ENCODE measurements at regions of chr12 and their contacts with region 1.

Region 1: DNA sequence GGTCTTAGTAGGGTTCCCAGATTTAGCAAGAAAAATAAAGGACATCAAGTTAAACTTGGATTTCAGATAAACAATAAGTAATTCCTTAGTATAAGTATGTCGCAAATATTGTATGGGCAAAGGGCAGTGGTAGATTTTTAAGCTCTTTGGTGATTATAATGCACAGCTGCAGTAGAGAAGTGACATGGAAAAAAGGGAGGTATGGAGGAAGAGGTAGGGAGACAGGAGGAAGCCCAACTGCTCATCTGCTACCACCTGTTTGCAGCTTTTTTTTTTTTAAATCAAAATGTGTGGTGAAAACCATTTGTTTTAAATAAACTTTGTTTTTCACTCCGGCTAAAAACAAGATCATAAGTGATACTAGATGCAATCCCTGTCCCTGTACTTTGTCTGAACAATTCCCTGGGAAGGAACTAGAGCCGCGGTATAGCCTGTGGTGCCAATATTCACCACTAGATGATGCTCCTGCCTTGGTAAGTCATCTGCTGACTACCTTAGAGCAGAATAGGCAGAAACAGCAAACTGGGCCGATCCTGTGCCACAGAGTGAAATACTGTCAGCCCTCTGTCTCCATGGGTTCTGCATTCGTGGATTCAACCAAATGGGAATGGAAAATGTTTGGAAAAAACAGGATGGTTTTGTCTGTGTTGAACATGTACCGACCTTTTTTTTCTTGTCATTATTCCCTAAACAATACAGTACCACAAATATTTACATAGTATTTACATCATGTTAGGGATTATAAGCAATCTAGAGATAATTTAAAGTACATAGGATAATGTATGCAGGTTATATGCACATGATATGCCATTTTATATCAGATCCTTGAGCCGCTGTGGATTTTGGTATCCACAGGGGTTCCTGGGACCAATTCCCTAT is 62.4 kb upstream of the PLBD1 start:
- DNase-seq: peak; percentile 76
- ATAC-seq: peak; percentile 97
- H3K4me3 Mint-ChIP-seq: no peak overlapping the region
- H3K27ac Mint-ChIP-seq: no peak overlapping the region
- H3K4me1 Mint-ChIP-seq: peaks cover 1% of the 10 kb centered on the region
- H3K27me3 Mint-ChIP-seq: no peaks in the 10 kb centered on the region
- CTCF ChIP-seq: peak; percentile 94

Region 2: DNA sequence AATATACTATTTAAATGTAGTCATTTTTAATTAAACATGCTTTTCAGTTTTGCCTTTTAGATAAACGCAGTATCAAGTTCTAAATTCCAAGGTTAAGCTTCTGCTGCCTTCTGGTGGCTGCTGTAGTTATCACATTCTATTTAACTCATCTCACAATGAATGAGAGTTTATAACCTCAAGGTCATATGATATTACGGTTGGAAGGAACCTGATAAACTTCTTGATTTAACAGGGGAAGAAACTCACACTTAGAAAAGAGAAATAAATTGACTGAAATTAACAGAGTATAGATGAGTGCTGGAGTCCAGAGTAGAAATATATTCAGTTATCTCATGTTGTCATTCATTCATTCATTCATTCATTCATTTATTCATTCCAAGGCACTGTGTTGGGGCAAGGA is 34.4 kb after region 1 on chr12:
- CTCF ChIA-PET with region 1: interaction called, 10 read pairs
- POLR2A ChIA-PET with region 1: no interaction called
- intact Hi-C with region 1: loop called (anchors 1 kb)
- DNase-seq: peak; percentile 57
- ATAC-seq: peak; percentile 65
- H3K4me3 Mint-ChIP-seq: no peak overlapping the region
- H3K27ac Mint-ChIP-seq: no peak overlapping the region
- H3K4me1 Mint-ChIP-seq: peaks cover 6% of the 10 kb centered on the region
- H3K27me3 Mint-ChIP-seq: peaks cover 5% of the 10 kb centered on the region
- CTCF ChIP-seq: peak; percentile 80

Region 3: DNA sequence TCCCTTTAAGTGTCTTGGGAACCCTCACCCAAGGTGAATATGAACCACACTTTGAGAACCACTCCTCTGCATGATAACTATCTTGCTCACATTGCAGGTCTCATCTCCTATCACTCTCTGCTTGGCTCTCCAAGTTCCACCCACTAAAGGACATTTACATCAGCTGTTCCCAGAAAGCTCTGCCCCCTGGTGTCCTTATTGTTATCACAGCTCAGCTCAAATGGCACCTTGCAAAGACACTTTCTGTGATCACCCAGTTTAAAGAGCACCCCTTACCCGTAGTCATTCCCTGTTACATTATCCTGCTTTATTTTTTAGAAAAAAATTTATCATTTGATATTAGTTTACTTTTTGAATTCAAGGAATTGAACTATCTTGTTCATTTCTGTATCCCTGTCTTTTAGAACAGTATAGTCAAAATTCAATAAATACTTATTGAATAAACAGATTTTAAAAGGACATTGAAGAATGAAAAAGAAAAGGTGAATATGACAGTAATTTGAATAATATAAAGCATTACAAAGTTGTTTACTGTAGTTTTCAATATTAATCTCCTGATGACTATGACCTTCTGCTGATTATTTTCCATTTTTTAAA is 86.9 kb after region 1 on chr12:
- CTCF ChIA-PET with region 1: interaction called, 10 read pairs
- POLR2A ChIA-PET with region 1: no interaction called
- intact Hi-C with region 1: loop called (anchors 1 kb)
- DNase-seq: peak; percentile 69
- ATAC-seq: peak; percentile 79
- H3K4me3 Mint-ChIP-seq: no peak overlapping the region
- H3K27ac Mint-ChIP-seq: no peak overlapping the region
- H3K4me1 Mint-ChIP-seq: peaks cover 5% of the 10 kb centered on the region
- H3K27me3 Mint-ChIP-seq: peaks cover 3% of the 10 kb centered on the region
- CTCF ChIP-seq: peak; percentile 66

Measured in activated CD8-positive, alpha-beta T cell treated with anti-CD3 and anti-CD28 coated beads for 36 hours (primary cell).